Aorta (tissue), 5 donors: ENCODE measurements at regions of chr9 and their contacts with region 1.

Region 1: GRCh38 chr9:95726756-95727155 is 148.7 kb upstream of the ERCC6L2 start:
- DNase-seq: no peak
- ATAC-seq: peak; percentile 63
- H3K4me3 ChIP-seq: no peak overlapping the region
- H3K27ac ChIP-seq: no peak overlapping the region
- H3K4me1 ChIP-seq: no peaks in the 10 kb centered on the region
- H3K27me3 ChIP-seq: no peaks in the 10 kb centered on the region

Region 2: GRCh38 chr9:95116003-95116807 is 610.6 kb before region 1 on chr9:
- intact Hi-C with region 1: no loop called
- DNase-seq: peak in 1 of 2 donors; percentile 59
- ATAC-seq: peak; percentile 12
- H3K4me3 ChIP-seq: no peak overlapping the region
- H3K27ac ChIP-seq: peak overlapping the region; percentile 90 to 96
- H3K4me1 ChIP-seq: peaks cover 0 to 7% of the 10 kb centered on the region in 2 donors
- H3K27me3 ChIP-seq: no peaks in the 10 kb centered on the region

Region 3: GRCh38 chr9:95875305-95876137 is 148.8 kb after region 1 on chr9 and contains the start of gene ERCC6L2:
- intact Hi-C with region 1: loop called in 1 of 2 experiments (anchors 10 kb)
- DNase-seq: peak; percentile 96 to 98
- ATAC-seq: peak; percentile 99
- H3K4me3 ChIP-seq: peak within 1 kb of the TSS; percentile 62 to 80
- H3K27ac ChIP-seq: peak within 1 kb of the TSS; percentile 96 to 99
- H3K4me1 ChIP-seq: peaks cover 0 to 3% of the 10 kb centered on the region in 2 donors
- H3K27me3 ChIP-seq: no peaks in the 10 kb centered on the region
- total RNA-seq, gene ERCC6L2: 46.4 to 54.5 TPM

Region 4: GRCh38 chr9:96061293-96061987 is 334.7 kb after region 1 on chr9:
- intact Hi-C with region 1: loop called in 1 of 2 experiments (anchors 10 kb)
- DNase-seq: peak in 1 of 2 donors; percentile 80
- ATAC-seq: peak; percentile 75
- H3K4me3 ChIP-seq: no peak overlapping the region
- H3K27ac ChIP-seq: no peak overlapping the region
- H3K4me1 ChIP-seq: no peaks in the 10 kb centered on the region
- H3K27me3 ChIP-seq: no peaks in the 10 kb centered on the region

Region 5: GRCh38 chr9:96217754-96218693 is 491.3 kb after region 1 on chr9:
- intact Hi-C with region 1: loop called (anchors 2 to 5 kb)
- DNase-seq: peak; percentile 81 to 93
- ATAC-seq: peak; percentile 94
- H3K4me3 ChIP-seq: no peak overlapping the region
- H3K27ac ChIP-seq: no peak overlapping the region
- H3K4me1 ChIP-seq: no peaks in the 10 kb centered on the region
- H3K27me3 ChIP-seq: no peaks in the 10 kb centered on the region